Left cardiac atrium (tissue), 4 donors: ENCODE measurements at regions of chr15 and their contacts with region 1.

Region 1: GRCh38 chr15:34501131-34501530 is 63.5 kb upstream of the GOLGA8A start:
- DNase-seq: no peak
- ATAC-seq: no peak

Region 2: DNA sequence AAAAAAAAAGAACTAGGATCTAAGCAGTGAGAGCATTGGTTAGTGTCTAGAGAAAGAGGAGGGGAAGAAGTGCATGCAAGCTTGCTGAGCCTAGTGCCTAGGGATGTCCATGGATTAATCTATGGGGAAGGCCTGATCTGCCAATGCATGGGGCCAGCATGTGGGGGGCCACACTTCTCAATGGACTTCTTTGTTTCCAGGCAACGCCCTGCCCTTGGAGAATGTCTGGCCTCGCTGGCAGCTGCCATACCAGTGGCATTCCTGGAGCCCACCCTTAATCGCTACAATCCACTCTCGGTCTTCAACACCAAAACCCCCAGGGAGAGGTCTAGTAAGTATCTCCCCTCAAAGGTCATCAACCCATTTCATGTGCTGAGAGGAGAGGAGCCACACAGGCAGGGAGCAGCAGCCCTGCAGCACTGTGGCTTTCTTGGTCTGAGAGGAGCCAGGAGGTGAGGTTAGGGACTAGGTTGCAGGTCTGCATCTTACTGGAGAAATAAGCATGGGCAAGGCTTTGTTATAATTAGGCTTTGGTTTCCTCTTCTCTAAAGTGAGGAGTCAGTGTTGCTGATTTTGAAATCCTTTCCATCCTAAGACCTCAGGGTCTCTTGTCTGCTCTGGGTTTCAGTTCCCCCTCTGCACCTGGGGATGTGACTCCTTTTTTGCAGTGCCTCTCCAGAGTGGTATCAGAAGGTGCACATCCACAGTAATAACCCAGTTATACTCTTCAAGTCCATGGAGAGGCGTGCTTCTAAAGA is 720.9 kb before region 1 on chr15:
- intact Hi-C with region 1: no loop called
- DNase-seq: no peak
- ATAC-seq: no peak

Region 3: DNA sequence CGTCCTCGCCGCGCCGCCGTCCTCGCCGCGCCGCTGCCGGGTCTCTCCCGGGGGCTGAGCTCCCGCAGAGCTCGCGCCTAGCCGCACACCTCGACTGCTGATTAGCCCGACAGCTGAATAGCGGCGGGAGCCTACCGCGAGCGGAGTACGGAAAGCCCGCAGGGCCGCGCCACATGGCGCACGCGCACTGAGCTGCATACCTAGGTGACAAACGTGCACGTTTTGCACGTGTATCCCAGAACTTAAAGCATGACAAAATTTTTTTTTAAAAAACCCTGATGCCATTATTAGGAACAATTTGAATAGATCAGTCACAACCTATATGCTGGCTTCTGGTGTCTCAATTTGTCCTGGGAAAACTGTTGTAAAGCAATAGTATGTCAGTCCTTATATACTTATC is 63.4 kb before region 1 on chr15 and contains the start of gene GOLGA8A:
- intact Hi-C with region 1: loop called in 1 of 2 experiments (anchors 10 kb)
- DNase-seq: peak; percentile 82
- ATAC-seq: peak; percentile 38 to 48
- total RNA-seq, gene GOLGA8A: 21.8 to 23.2 TPM

Region 4: DNA sequence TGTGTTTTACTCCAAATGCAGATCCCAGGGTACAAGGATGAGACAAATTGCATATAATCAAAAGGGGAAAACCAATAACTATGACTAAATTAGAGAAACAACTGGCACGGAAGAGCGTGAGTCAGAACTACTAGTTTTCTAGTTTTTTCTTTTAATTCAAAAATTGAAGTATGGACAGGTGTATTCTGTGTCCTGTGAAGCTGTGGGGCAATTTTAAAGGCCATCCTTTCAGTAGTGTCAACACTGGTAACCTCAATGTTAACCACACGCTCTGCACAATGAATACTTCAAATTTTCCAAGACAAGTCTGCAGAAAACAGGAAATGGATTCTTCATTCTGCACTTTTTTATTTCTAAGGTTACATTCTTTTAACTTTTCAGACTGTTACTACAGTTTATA is 31.0 kb before region 1 on chr15:
- intact Hi-C with region 1: no loop called
- DNase-seq: no peak
- ATAC-seq: no peak